GM18951 (cell line): ENCODE measurements at regions of chr9 and their contacts with region 1.

Region 1: GRCh38 chr9:73683862-73684591 is 532.4 kb downstream of the ANXA1 start:
- POLR2A ChIP-seq: no peak

Region 2: GRCh38 chr9:73869264-73869663 is 185.2 kb after region 1 on chr9:
- in situ Hi-C with region 1: no loop called
- POLR2A ChIP-seq: no peak

Region 3: DNA sequence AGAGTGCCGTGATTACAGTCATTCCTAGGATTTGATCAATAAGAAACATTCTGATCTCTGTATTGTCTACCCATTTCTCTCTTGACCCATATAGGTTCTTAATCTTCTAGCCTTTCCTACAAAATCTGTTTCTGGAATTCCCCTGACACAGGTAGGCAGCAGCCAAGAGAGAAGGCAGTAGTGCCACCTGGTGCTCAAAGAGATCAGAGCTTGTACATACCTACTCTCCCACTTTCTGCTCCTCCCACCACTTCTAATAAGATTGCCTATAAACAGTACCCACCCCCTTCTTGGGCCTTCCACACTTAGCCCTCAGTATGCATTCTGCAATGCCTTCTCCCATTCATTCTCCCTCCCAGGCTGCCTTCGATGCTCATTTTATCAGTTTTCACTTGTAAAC is 695.7 kb after region 1 on chr9:
- in situ Hi-C with region 1: loop called (anchors 25 kb)
- POLR2A ChIP-seq: no peak